Right ventricle myocardium superior (tissue), 1 donor: ENCODE measurements at regions of chr10 and their contacts with region 1.

Region 1: GRCh38 chr10:71396084-71396720 is 518 bp upstream of the CDH23 start:
- DNase-seq: peak; percentile 75
- ATAC-seq: peak; percentile 95

Region 2: GRCh38 chr10:71483885-71484751 is 87.9 kb after region 1 on chr10:
- intact Hi-C with region 1: loop called (anchors 2 kb)
- DNase-seq: peak; percentile 67
- ATAC-seq: peak; percentile 92

Region 3: GRCh38 chr10:71569775-71570588 is 173.8 kb after region 1 on chr10:
- intact Hi-C with region 1: loop called (anchors 5 kb)
- DNase-seq: peak; percentile 79
- ATAC-seq: peak; percentile 77

Region 4: DNA sequence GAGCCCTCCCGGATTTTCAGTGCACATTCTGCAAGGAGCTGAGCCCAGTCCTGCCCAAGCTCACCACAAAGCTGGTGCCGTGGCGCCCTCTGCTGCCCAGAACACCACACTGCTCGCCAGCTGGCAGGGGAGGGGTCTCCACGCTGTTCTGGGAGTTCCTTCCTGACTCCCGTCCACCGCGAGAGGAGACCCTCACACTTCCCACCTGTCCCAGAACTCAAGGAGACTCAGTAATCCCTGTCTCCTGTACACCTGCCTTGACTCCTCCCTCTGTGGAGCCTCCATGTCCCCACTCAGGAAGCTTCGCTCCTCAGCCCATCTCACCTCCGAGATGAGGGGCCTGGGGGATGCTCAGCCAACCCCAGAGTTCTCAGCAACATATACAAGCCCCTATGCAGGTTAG is 312.1 kb after region 1 on chr10:
- intact Hi-C with region 1: loop called (anchors 5 kb)
- DNase-seq: peak; percentile 84
- ATAC-seq: peak; percentile 70